ENCODE measurements at regions of chr2 and their contacts with region 1.

Region 1: GRCh38 chr2:86079981-86080911 is 25.4 kb downstream of the POLR1A start:
- DNase-seq: peak; percentile 81 to 94 (median 91)
- H3K4me3 ChIP-seq: no peak overlapping the region
- H3K27ac ChIP-seq: peak overlapping the region in 1 of 5 donors; percentile 36
- H3K4me1 ChIP-seq: peaks cover 0 to 9% of the 10 kb centered on the region in 2 donors
- H3K27me3 ChIP-seq: no peaks in the 10 kb centered on the region
- CTCF ChIP-seq: peak; percentile 74 to 90 (median 80)
- POLR2A ChIP-seq: no peak

Region 2: DNA sequence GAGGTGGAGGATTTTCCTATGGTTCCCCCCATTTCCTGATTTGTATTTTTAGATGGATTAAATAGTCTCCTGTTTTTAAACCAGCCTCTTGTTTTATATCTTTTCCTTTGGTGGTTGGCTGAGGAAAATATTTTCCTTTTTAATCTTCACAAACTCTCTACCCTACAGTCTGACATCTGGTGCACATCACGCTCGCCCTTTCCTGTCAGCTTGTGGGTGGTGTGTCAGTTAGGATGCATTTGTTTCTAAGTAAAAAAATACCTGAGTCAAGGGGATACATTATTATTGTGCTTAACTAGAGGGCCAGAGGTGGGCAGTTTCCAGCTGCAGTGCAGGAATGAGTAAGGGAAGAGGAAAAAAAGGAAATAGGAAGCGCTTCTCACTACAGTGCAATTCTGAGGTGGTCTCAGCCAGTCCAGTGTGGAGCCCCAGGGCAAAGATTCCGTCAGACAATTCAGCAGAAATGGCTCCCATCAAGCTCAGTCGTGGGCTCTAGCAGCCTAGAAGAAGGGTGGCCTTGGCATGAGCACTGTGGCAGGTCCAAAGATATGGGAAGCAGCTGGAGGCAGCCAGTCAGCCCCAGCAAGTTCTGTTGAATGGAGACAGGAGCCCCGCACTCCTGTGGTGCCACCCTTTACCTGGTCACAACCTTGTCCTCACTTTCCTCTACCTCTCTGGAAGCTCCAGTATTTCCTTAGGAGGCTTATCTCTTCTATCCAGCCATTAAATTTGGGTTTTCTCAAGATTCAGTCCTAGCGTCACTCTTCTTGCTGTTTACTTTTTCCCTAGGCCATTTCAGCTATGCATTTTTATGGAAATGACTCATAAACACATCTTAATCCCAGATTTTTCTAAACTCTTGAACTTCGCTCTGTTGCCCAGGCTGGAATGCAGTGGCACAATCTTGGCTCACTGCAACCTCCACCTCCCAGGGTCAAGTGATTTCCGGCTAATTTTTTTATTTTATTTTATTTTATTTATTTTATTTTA is 430.8 kb before region 1 on chr2:
- intact Hi-C with region 1: loop called in 1 of 2 experiments (anchors 10 kb)
- DNase-seq: no peak
- H3K4me3 ChIP-seq: no peak overlapping the region
- H3K27ac ChIP-seq: no peak overlapping the region
- H3K4me1 ChIP-seq: no peaks in the 10 kb centered on the region
- H3K27me3 ChIP-seq: no peaks in the 10 kb centered on the region
- CTCF ChIP-seq: no peak
- POLR2A ChIP-seq: no peak

Region 3: DNA sequence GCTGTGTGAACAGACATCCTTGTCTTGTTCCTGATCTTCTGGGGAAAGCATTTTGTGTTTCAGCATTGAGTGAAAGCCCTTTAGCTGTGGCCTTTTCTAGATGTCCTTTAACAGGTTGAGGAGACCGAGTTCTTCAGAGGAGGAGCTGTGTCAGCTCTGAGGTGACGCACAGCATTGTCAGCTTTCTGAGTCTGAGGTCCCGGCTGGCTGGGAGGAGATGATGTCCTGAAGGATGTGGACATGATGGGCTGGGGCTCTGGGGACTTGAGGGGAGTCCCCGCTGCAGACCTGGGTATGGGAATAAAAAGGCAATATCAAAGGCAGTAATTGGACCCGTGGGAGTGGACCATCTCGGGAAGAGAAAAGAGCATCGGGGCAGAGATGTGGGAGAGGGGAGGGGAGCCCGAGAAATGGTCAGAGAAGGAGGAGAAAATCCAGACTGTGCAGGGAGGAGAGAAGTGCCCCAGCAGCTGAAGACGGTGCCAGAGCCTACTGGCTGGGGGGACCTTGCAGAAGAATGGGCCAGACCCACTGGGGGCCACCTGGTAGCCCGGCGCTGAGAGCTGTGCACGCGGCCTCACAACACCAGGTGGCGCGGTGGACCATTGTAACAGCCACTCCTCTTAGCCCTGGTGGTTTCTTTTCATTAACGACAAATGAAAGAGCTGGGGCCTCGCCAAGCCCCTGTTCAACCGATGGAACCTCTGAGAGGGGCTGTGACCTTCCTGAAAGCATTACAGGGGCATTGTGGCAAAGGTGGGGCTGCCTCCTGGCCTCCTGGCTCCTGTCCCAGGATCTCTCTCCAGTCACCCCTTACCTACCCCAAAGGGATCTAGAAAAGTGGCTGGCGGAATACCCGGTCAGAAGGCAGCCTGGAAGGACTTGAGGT is 253.0 kb before region 1 on chr2:
- intact Hi-C with region 1: loop called (anchors 2 to 5 kb)
- DNase-seq: peak; percentile 64 to 93 (median 84)
- H3K4me3 ChIP-seq: peak overlapping the region in 1 of 4 donors; percentile 49
- H3K27ac ChIP-seq: no peak overlapping the region
- H3K4me1 ChIP-seq: peaks cover 0 to 3% of the 10 kb centered on the region in 2 donors
- H3K27me3 ChIP-seq: no peaks in the 10 kb centered on the region
- CTCF ChIP-seq: peak; percentile 85 to 98 (median 94)
- POLR2A ChIP-seq: no peak

Region 4: GRCh38 chr2:85888684-85889626 is 191.3 kb before region 1 on chr2 and contains the start of gene ST3GAL5:
- intact Hi-C with region 1: loop called (anchors 2 to 5 kb)
- DNase-seq: peak; percentile 91 to 96 (median 93)
- H3K4me3 ChIP-seq: peak within 1 kb of the TSS; percentile 31 to 98 (median 64)
- H3K27ac ChIP-seq: peak within 1 kb of the TSS; percentile 84 to 99 (median 95)
- H3K4me1 ChIP-seq: peaks cover 54 to 75% of the 10 kb centered on the region in 2 donors
- H3K27me3 ChIP-seq: no peaks in the 10 kb centered on the region
- CTCF ChIP-seq: peak; percentile 9 to 69 (median 58)
- POLR2A ChIP-seq: peak; percentile 45 to 91
- total RNA-seq, gene ST3GAL5: 25.6 to 172 (median 89.2) TPM

Region 5: DNA sequence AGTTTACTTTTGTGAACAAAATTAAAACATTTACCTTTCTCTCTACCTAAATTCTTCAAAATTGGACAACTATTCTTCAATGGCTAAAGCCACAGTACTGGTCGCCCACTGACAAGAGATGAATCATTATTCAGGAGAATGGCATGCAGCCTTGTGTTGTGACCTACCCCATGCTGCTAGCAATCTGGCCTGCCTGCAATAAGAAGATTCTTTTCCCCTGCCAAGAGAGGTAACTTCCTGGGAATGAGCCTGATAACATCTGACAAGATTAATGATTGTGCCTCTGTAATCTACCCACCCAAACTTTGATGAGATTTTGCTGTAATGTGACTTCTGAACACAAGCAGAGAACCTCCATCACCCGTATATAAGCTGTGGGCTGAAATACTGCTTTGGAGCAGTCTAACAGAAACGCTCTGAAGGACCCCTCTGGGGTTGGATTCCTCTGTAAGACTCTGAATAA is 144.5 kb before region 1 on chr2:
- intact Hi-C with region 1: no loop called
- DNase-seq: peak in 6 of 7 donors; percentile 61 to 85 (median 80)
- H3K4me3 ChIP-seq: no peak overlapping the region
- H3K27ac ChIP-seq: peak overlapping the region; percentile 66 to 91 (median 78)
- H3K4me1 ChIP-seq: peaks cover 41 to 51% of the 10 kb centered on the region in 2 donors
- H3K27me3 ChIP-seq: no peaks in the 10 kb centered on the region
- CTCF ChIP-seq: no peak
- POLR2A ChIP-seq: peak in 1 of 2 donors; percentile 18

Region 6: GRCh38 chr2:86020984-86021383 is 59.3 kb before region 1 on chr2:
- intact Hi-C with region 1: loop called in 1 of 2 experiments (anchors 10 kb)
- DNase-seq: no peak
- H3K4me3 ChIP-seq: no peak overlapping the region
- H3K27ac ChIP-seq: peak overlapping the region in 1 of 5 donors; percentile 29
- H3K4me1 ChIP-seq: peaks cover 0 to 12% of the 10 kb centered on the region in 2 donors
- H3K27me3 ChIP-seq: no peaks in the 10 kb centered on the region
- CTCF ChIP-seq: no peak
- POLR2A ChIP-seq: no peak